ENCODE measurements at regions of chr16 and their contacts with region 1.

Region 1: DNA sequence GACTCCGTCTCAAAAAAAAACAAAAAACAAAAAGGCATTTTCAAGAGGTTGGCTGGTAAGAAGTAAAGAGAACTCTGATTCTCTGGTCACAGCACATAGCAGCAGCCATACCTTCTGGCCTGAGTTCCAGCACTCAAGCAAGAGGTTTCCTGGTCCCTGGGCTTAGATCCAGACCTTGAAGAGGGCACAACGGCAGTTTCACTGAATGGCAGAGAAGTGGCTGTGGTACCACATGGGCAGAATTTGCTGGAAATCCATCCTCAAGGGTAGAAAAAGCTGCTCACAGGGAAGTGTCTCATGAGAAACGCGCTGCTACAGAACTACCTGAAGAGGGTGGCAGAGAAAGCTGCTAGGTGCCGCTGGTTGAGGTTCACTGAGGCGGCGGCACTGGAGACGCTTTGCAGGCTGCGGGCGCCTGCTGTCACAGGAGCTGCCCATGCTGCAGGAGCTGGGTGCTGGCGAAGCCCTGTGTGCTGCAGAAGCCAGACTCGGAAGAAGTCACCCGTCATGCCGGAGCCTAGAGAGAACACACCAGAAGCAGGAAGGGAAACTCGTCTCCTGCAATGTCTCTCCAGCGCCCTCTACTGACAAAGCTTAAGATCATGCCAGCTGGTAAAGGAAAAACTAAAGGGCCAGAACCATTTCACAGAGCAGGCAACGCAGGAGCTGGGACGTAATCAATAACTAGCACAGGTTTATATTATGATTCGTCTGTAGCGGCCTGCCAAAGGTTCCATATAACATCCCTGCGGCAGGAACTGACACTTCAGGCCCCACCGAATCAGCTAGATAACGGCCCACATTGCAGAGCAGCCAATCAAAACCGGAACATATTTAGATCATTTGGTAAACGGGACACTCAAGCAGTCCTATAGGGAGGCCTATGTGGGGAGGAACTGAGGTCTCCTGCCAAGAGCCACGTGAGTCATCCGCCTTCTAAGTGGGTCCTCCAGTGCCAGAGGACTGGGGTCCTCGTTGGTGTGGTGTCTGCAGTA is 5.4 kb upstream of the ZNF213 start:
- DNase-seq: peak; percentile 82
- H3K4me3 Mint-ChIP-seq: peak overlapping the region; percentile 91
- H3K27ac Mint-ChIP-seq: peak overlapping the region; percentile 87
- H3K4me1 Mint-ChIP-seq: peaks cover 66% of the 10 kb centered on the region
- H3K27me3 Mint-ChIP-seq: no peaks in the 10 kb centered on the region

Region 2: DNA sequence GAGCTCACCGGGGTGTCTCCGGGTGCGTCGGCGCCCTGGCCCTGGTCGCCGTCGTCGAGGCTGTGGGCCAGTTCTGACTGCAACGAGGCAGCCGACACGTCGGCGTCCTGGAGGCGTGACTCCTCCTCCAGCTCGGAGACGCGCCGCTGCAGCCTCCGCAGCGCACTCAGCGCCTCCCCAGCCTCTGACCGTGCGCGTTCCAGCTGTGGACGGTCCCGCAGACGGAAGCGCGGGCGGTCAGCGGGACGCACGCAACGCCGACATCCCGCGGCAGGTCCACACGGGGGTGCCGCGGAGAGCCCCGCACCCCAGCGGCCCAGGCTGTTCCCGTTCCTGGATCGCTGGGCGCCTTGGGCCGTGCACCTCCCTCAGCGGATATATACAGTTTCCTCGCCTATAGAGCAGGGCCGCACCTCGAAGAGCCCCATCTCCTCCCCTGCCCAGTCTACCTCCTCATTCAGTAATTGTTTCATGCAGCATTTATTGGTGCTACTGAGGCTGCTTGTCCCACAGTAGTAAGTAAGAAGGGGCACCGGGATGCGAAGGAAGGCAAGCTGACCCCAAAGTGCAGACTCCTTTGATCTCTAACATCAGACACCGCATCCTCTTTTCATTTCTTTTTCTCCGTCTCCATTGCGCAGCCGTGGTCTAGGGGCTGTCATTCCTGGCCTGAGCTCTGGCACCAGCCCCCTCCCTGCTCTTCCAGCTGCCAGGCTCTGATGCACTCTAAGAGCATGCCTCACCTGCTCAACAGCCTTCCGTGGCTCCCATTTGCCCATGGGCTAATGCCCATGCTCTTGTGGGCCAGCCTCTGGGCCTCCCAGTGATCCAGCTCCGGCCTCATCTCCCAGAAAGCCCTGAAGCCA is 99.7 kb before region 1 on chr16:
- CTCF ChIA-PET with region 1: interaction called, 193 read pairs
- POLR2A ChIA-PET with region 1: interaction called, 14 read pairs
- DNase-seq: peak; percentile 75
- H3K4me3 Mint-ChIP-seq: peak overlapping the region; percentile 69
- H3K27ac Mint-ChIP-seq: peak overlapping the region; percentile 67
- H3K4me1 Mint-ChIP-seq: peaks cover 46% of the 10 kb centered on the region
- H3K27me3 Mint-ChIP-seq: peaks cover 42% of the 10 kb centered on the region

Region 3: DNA sequence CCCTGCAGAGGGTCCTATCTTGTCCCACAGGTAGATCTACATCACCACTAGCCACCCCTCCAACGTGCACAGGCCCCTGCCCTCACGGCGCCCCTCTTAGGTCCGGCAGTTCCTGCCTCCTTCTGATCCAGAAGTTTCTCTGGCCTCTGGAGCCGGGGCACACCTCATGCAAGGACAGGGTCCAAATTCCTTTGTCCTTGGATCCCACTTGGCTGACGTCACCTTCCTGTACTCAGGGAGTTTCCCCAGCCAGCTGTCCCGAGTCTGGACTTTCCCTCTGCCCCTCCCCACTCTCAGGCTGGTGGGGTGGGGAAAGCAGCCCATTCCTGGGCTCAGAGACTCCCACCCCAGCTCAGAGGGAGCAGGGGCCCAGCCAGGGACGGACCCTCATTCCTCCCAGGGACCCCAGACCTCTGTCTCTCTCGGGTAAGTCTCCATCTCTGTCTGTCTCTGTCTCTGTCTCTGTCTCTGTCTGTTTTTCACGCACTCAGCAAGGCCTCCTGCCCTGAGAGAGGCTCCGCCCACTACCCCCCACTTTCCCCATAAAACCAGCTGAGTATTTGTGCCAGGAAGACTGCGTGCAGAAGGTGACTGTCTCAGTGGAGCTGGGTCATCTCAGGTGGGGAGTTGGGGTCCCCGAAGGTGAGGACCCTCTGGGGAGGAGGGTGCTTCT is 64.2 kb before region 1 on chr16 and contains the start of gene IL32:
- CTCF ChIA-PET with region 1: interaction called, 177 read pairs
- POLR2A ChIA-PET with region 1: interaction called, 100 read pairs
- DNase-seq: peak; percentile 80
- H3K4me3 Mint-ChIP-seq: peak within 1 kb of the TSS; percentile 100
- H3K27ac Mint-ChIP-seq: peak within 1 kb of the TSS; percentile 99
- H3K4me1 Mint-ChIP-seq: peaks cover 68% of the 10 kb centered on the region
- H3K27me3 Mint-ChIP-seq: no peaks in the 10 kb centered on the region
- total RNA-seq, gene IL32: 4,131 to 4,213 TPM

Region 4: GRCh38 chr16:3087243-3088235 is 41.9 kb before region 1 on chr16:
- CTCF ChIA-PET with region 1: interaction called, 254 read pairs
- POLR2A ChIA-PET with region 1: interaction called, 4 read pairs
- DNase-seq: no peak
- H3K4me3 Mint-ChIP-seq: no peak overlapping the region
- H3K27ac Mint-ChIP-seq: no peak overlapping the region
- H3K4me1 Mint-ChIP-seq: peaks cover 44% of the 10 kb centered on the region
- H3K27me3 Mint-ChIP-seq: no peaks in the 10 kb centered on the region

Region 5: DNA sequence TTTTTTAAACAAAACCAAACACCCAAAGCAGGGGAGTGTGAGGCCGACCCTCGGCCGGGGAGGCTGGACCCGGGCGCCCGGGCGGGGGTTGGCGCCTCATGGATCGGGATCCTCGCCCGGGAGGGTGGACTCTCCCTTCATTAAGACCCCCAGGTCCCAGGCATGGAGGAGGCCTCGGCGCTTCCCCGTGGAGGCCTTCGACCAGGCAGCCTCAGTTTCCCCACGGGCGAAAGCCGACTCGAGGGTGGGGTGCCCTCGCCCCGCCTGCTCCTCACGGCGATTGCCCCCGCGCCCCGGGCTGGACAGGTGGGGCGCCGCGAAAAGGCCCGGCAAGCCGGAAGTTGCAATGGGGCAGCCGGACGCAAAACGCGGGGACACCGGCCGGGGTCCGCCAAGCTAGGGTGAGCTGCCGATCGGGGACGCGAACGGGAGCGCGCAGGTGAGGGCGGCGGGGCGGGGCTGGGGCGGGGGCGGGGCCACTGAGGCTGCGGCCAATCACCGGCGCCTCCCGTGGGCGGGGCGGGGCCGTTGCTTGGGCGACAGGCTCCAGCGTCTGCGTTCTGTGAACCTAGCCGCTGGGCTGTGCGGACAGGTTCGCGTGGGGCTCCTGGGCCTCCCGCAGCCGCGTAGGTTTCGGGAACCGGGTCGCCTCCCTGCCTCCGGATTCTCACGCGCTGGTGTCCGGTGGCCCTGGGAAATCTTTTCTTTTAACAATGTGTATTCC is 23.1 kb before region 1 on chr16:
- CTCF ChIA-PET with region 1: interaction called, 254 read pairs
- POLR2A ChIA-PET with region 1: interaction called, 14 read pairs
- DNase-seq: peak; percentile 92
- H3K4me3 Mint-ChIP-seq: peak overlapping the region; percentile 76
- H3K27ac Mint-ChIP-seq: peak overlapping the region; percentile 81
- H3K4me1 Mint-ChIP-seq: peaks cover 42% of the 10 kb centered on the region
- H3K27me3 Mint-ChIP-seq: peaks cover 5% of the 10 kb centered on the region

Region 6: DNA sequence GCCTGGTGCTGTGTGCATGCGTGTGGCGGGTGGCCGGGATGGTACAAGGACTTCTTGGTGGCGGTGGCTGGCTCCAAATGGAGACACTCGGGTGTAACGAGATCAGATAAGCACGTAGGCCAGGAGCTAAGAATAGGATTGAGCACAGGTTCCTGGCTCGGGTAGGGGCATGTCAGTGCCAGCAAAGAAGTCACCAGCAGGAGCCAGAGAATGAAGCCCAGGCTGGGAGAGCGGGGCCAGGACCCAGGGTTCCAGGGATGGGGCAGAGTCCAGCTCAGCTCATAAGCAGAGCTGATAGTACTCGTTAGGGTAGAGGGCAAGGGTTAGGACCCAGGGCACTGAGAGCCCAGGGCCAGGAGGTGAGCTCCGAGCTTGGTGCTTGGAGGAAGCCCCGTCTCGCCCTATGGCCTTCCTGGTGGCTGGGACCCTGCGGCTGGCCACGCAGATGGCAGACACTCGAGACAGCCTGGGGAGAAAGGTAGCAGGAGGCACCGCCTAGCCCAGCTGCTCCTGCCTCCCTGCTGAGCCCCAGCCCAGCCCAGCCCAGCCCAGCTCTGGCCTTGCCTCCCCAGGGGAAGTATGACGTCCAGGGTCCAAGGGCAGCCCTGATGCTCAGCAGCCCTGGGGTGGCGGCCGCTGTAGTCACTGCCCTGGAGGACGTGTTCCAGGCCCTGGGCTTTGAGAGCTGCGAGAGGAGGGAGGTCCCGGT is 14.3 kb after region 1 on chr16:
- CTCF ChIA-PET with region 1: interaction called, 56 read pairs
- POLR2A ChIA-PET with region 1: interaction called, 51 read pairs
- DNase-seq: no peak
- H3K4me3 Mint-ChIP-seq: no peak overlapping the region
- H3K27ac Mint-ChIP-seq: no peak overlapping the region
- H3K4me1 Mint-ChIP-seq: no peaks in the 10 kb centered on the region
- H3K27me3 Mint-ChIP-seq: no peaks in the 10 kb centered on the region

Region 7: GRCh38 chr16:3165111-3165822 is 35.8 kb after region 1 on chr16:
- CTCF ChIA-PET with region 1: interaction called, 33 read pairs
- POLR2A ChIA-PET with region 1: interaction called, 7 read pairs
- DNase-seq: no peak
- H3K4me3 Mint-ChIP-seq: no peak overlapping the region
- H3K27ac Mint-ChIP-seq: peak overlapping the region; percentile 50
- H3K4me1 Mint-ChIP-seq: peaks cover 27% of the 10 kb centered on the region
- H3K27me3 Mint-ChIP-seq: peaks cover 25% of the 10 kb centered on the region

Region 8: GRCh38 chr16:3231281-3231680 is 101.8 kb after region 1 on chr16:
- CTCF ChIA-PET with region 1: no interaction called
- POLR2A ChIA-PET with region 1: no interaction called
- DNase-seq: no peak
- H3K4me3 Mint-ChIP-seq: no peak overlapping the region
- H3K27ac Mint-ChIP-seq: no peak overlapping the region
- H3K4me1 Mint-ChIP-seq: peaks cover 27% of the 10 kb centered on the region
- H3K27me3 Mint-ChIP-seq: no peaks in the 10 kb centered on the region

Region 9: GRCh38 chr16:3242709-3243108 is 113.3 kb after region 1 on chr16:
- CTCF ChIA-PET with region 1: no interaction called
- POLR2A ChIA-PET with region 1: no interaction called
- DNase-seq: no peak
- H3K4me3 Mint-ChIP-seq: no peak overlapping the region
- H3K27ac Mint-ChIP-seq: no peak overlapping the region
- H3K4me1 Mint-ChIP-seq: no peaks in the 10 kb centered on the region
- H3K27me3 Mint-ChIP-seq: no peaks in the 10 kb centered on the region

Region 10: GRCh38 chr16:3328643-3329042 is 199.2 kb after region 1 on chr16:
- CTCF ChIA-PET with region 1: no interaction called
- POLR2A ChIA-PET with region 1: no interaction called
- DNase-seq: no peak
- H3K4me3 Mint-ChIP-seq: no peak overlapping the region
- H3K27ac Mint-ChIP-seq: no peak overlapping the region
- H3K4me1 Mint-ChIP-seq: no peaks in the 10 kb centered on the region
- H3K27me3 Mint-ChIP-seq: no peaks in the 10 kb centered on the region